ENCODE measurements at regions of chr22 and their contacts with region 1.

Region 1: DNA sequence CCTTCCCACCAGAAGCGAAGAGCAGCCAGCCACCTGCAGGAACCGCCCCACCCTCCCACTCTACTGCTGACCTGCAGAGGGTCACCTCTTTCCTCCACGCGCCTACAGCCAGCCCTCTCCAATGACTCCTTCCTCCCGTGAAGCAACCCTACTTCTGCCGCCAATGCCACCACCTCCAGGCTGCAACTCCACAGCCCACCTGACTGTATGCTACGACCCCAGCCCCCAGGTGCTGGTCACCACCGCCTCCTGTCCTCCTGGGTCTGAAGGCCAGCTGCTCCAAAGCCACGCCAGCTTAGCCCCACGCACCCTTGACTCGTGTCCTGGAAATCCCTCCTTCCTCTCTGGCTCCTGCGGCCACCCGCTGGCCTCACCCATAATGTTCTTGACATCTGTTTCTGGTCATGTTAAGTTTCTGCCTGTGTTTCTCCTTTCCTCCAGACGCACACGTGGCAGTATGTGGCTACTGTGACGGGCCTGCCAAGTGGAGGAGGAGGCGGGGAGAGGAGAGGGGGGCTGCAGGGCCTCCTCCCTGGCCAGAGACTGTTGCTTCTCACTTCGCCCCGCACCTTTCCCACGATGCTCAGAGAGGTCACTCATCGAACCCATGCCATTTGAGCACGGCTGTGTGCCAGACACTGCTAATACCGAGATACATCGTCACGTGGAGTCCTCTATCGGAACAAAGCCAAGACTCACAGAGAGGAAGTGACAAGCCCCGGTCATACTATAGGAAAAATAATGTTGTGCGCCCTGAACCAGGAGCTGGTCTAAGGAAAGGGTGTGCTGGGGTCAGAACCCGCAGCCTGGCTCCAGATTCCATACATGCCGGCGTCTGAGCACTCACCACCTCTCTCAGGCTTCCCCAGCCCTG is 11.6 kb downstream of the C1QTNF6 start:
- DNase-seq: peak; percentile 71
- H3K4me3 Mint-ChIP-seq: peak overlapping the region; percentile 61
- H3K27ac Mint-ChIP-seq: peak overlapping the region; percentile 80
- H3K4me1 Mint-ChIP-seq: peaks cover 50% of the 10 kb centered on the region
- H3K27me3 Mint-ChIP-seq: peaks cover 3% of the 10 kb centered on the region
- CTCF ChIP-seq: no peak

Region 2: GRCh38 chr22:37154925-37155712 is 21.3 kb before region 1 on chr22:
- CTCF ChIA-PET with region 1: no interaction called
- POLR2A ChIA-PET with region 1: no interaction called
- intact Hi-C with region 1: no loop called
- DNase-seq: no peak
- H3K4me3 Mint-ChIP-seq: no peak overlapping the region
- H3K27ac Mint-ChIP-seq: no peak overlapping the region
- H3K4me1 Mint-ChIP-seq: no peaks in the 10 kb centered on the region
- H3K27me3 Mint-ChIP-seq: peaks cover 31% of the 10 kb centered on the region
- CTCF ChIP-seq: no peak

Region 3: DNA sequence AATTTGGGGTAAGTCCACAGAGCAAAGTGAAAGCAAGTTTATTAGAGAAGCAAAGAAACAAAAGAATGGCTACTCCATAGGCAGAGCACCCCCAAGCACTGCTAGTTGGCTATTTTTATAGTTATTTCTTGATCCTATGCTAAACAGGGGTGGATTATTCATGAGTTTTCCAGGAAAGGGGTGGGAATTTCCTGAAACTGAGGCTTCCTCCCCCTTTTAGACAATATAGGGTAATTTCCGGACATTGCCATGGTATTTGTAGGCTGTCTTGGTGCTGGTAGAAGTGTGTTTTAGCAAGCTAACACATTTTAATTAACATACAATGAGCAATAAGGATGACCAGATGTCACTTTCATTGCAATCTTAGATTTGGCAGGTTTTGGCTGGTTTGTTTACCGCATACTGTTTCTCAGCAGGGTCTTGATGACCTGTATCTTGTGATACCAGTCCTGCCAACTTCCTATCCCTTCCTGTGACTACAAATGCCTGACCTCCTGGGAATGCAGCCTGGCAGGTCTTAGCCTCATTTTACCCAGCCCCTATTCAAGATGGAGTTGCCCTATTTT is 12.5 kb after region 1 on chr22:
- CTCF ChIA-PET with region 1: no interaction called
- POLR2A ChIA-PET with region 1: interaction called, 11 read pairs
- intact Hi-C with region 1: no loop called
- DNase-seq: peak; percentile 29
- H3K4me3 Mint-ChIP-seq: no peak overlapping the region
- H3K27ac Mint-ChIP-seq: no peak overlapping the region
- H3K4me1 Mint-ChIP-seq: peaks cover 21% of the 10 kb centered on the region
- H3K27me3 Mint-ChIP-seq: no peaks in the 10 kb centered on the region
- CTCF ChIP-seq: no peak

Measured in MCF 10A (cell line).